ENCODE measurements at regions of chr5 and their contacts with region 1.

Region 1: GRCh38 chr5:6886866-6887265 is 173.6 kb downstream of the TENT4A start:
- DNase-seq: no peak
- H3K4me3 ChIP-seq: no peak overlapping the region
- CTCF ChIP-seq: no peak
- POLR2A ChIP-seq: no peak

Region 2: DNA sequence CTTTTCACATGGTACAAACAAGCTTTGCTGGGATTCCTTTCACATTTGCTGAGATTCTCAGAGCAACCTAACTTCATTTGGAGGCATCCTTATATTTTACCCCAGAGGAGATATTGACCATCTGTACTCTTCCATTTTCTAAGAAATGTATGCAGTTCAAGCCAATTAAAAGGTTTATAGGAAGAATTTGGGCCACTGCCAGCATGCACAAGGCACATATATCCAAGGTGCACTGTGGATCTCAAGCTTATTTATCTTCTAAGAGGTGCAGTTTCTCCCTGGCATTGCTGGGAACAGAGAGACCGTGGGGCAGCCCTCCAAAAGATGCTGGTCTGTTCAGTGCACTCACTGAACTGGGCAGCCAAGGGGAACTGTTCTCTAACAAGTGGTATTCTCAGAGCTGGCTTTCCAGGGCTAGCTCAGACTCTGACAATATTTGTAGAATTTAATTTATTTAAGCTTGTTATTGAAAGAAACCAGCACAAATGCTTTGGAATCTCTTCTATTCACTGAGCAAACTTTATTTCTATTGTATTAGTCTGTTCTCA is 39.7 kb after region 1 on chr5:
- intact Hi-C with region 1: no loop called
- DNase-seq: no peak
- H3K4me3 ChIP-seq: no peak overlapping the region
- CTCF ChIP-seq: no peak
- POLR2A ChIP-seq: no peak

Region 3: DNA sequence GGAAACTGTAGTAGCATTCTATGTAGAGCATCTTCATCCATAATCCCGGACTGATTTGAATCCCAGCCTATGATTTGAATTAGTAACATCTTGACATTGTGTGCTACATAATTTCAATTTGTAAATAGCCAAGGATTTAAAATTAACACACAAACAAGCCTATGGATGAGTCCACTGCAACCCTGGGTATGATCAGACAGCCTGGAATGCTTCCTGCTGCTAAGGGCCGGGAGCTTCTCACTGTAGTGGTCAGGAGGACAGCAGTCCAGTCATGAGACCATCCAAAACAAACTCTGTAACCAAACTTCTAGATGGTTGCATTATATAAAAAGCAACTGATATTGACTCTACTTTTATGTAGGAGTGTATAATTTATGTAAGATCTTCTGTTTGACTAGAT is 1521.4 kb after region 1 on chr5:
- intact Hi-C with region 1: loop called (anchors 5 kb)
- DNase-seq: no peak
- H3K4me3 ChIP-seq: no peak overlapping the region
- CTCF ChIP-seq: no peak
- POLR2A ChIP-seq: no peak

Measured in lower leg skin (tissue), 4 donors.